HEK293 (cell line): ENCODE measurements at regions of chr19 and their contacts with region 1.

Region 1: GRCh38 chr19:47081111-47081510 is 32.5 kb downstream of the ZC3H4 start:
- H3K4me3 ChIP-seq: no peak overlapping the region
- H3K27ac ChIP-seq: peak overlapping the region; percentile 37; the same call in 1 of the 2 replicates
- H3K4me1 ChIP-seq: no peaks in the 10 kb centered on the region
- CTCF ChIP-seq: no peak

Region 2: GRCh38 chr19:46944918-46945628 is 136.0 kb before region 1 on chr19:
- CTCF ChIA-PET with region 1: no interaction called
- POLR2A ChIA-PET with region 1: no interaction called
- H3K4me3 ChIP-seq: no peak overlapping the region
- H3K27ac ChIP-seq: peak overlapping the region; percentile 48
- H3K4me1 ChIP-seq: peaks cover 22% of the 10 kb centered on the region
- CTCF ChIP-seq: no peak

Region 3: DNA sequence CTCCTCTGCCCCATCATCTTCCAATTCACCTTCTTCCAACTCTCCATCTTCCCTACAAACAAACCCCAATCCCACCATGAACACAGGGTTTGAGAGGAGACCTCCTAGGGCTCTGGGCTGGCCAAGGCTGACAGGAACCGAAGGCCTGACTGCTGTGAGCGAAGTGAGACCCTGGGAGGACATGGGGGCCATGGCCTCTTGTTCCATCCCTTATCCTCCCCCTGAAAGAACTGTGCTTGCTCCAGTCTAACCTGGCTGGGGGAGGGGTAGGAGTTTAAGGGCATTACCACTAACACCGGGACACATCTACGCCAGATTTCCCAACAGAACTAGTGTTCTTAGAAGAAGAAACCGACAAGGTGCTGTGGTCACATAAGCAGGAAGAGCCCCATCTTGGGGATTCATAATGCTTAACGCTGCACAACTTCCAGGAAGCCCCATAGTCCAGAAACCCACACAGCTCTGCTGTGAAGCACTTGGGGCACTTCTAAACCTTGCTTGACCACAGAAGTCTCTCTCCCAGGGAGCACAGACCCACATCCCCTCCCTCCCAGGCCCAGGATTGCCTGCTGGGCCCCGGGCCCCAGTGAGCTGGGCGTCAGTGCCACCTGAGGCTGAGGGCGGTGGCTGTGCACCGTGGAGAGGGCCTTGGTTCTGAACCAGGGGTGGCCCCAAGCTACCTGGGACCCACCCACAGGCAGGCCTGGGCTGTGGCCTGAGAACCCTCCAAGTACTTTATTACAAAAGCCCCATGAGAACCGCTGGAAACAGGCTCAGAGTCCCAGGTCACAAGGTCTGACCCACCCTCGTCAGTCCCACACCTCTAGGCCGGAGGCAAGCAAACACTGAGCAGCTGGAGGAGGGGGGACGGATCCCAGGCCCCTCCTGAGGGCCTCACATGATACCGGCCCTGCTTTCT is 13.7 kb after region 1 on chr19:
- CTCF ChIA-PET with region 1: interaction called, 15 read pairs
- POLR2A ChIA-PET with region 1: interaction called, 5 read pairs
- H3K4me3 ChIP-seq: no peak overlapping the region
- H3K27ac ChIP-seq: peak overlapping the region; percentile 0; the same call in 1 of the 2 replicates
- H3K4me1 ChIP-seq: no peaks in the 10 kb centered on the region
- CTCF ChIP-seq: no peak

Region 4: GRCh38 chr19:47296036-47296435 is 214.9 kb after region 1 on chr19:
- CTCF ChIA-PET with region 1: no interaction called
- POLR2A ChIA-PET with region 1: no interaction called
- H3K4me3 ChIP-seq: no peak overlapping the region
- H3K27ac ChIP-seq: no peak overlapping the region
- H3K4me1 ChIP-seq: no peaks in the 10 kb centered on the region
- CTCF ChIP-seq: peak; percentile 70